GM23248 (cell line): ENCODE measurements at regions of chr9 and their contacts with region 1.

Region 1: DNA sequence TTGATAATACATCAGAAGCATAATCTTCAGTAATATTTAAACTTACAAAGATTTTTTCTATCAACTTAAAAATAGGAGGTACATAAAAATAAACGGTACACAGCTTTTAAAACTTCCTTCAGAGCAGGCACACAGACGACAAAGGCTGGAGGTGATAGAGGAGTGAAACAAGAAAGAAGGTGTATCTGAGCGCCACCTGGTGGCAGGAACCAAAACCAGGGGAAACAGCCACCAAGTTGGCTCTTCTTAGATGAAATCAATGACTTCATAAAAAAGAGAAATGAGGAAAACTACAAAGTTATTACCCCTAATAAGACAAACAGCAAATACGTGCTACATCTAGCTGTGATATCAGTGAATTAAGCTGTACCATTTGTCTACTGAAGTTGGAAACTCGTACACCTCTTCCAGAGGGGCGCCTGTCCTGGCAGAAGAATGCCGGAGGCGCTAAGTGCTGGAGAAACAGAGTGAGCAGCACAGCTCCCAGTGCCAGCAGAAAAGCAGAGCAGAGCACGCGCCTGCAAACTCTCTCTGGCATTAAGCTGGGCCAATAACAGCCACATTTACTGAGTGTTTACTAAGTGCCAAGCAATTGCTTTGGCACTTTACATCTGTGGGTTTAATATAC is 85.9 kb downstream of the SETX start:
- DNase-seq: peak; percentile 74
- H3K4me3 ChIP-seq: no peak overlapping the region
- H3K27ac ChIP-seq: no peak overlapping the region
- H3K4me1 ChIP-seq: no peaks in the 10 kb centered on the region
- H3K27me3 ChIP-seq: no peaks in the 10 kb centered on the region

Region 2: GRCh38 chr9:131608493-131609037 is 660.3 kb before region 1 on chr9:
- in situ Hi-C with region 1: loop called (anchors 25 kb)
- DNase-seq: peak; percentile 94
- H3K4me3 ChIP-seq: peak overlapping the region; percentile 43
- H3K27ac ChIP-seq: peak overlapping the region; percentile 77
- H3K4me1 ChIP-seq: peaks cover 30% of the 10 kb centered on the region
- H3K27me3 ChIP-seq: no peaks in the 10 kb centered on the region

Region 3: DNA sequence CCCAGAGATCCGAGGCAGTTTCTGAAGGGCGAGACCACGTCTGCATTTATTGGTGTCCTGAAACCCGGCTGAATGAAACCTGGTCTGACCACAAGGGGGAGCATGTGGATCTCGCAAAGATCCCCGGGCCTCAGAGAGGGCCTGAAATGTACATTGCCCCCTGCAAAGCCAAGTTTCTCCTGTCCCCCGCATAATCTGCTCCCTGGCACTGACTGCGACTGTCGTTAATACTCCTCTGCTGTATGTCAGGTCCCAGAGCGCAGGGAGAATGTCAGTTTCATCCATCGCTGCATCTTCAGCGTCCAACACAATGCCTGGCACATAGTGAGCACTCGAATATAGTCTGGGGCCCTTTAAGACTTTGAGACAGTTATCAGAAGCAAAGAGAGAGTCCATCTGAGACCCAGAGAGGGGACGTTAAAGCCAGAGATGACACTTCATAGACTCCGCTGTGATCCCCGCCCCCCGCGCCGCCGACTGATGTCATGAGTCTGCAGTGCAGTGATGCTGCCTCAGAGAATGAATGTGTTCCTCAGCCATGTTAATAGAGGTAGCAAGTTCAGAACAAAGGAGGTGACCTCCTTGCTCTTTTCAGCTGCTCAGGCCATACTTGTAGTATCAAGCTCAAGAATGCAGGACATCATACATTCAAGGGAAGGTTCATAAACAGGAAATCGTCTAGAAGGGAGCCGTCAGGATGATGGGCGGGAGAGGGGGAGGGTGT is 239.1 kb after region 1 on chr9:
- in situ Hi-C with region 1: no loop called
- DNase-seq: peak; percentile 75
- H3K4me3 ChIP-seq: no peak overlapping the region
- H3K27ac ChIP-seq: no peak overlapping the region
- H3K4me1 ChIP-seq: no peaks in the 10 kb centered on the region
- H3K27me3 ChIP-seq: peaks cover 43% of the 10 kb centered on the region